Activated naive CD8-positive, alpha-beta T cell treated with anti-CD3 and anti-CD28 coated beads, Interleukin-2, amount 10 ng/mL, durations not matched to agents 7 days and 5 days (primary cell): ENCODE measurements at regions of chr12 and their contacts with region 1.

Region 1: GRCh38 chr12:56178347-56178746 is 10.9 kb downstream of the SMARCC2 start:
- DNase-seq: no peak
- ATAC-seq: no peak
- H3K4me3 Mint-ChIP-seq: no peak overlapping the region
- H3K27ac Mint-ChIP-seq: no peak overlapping the region
- H3K4me1 Mint-ChIP-seq: no peaks in the 10 kb centered on the region
- H3K27me3 Mint-ChIP-seq: no peaks in the 10 kb centered on the region

Region 2: DNA sequence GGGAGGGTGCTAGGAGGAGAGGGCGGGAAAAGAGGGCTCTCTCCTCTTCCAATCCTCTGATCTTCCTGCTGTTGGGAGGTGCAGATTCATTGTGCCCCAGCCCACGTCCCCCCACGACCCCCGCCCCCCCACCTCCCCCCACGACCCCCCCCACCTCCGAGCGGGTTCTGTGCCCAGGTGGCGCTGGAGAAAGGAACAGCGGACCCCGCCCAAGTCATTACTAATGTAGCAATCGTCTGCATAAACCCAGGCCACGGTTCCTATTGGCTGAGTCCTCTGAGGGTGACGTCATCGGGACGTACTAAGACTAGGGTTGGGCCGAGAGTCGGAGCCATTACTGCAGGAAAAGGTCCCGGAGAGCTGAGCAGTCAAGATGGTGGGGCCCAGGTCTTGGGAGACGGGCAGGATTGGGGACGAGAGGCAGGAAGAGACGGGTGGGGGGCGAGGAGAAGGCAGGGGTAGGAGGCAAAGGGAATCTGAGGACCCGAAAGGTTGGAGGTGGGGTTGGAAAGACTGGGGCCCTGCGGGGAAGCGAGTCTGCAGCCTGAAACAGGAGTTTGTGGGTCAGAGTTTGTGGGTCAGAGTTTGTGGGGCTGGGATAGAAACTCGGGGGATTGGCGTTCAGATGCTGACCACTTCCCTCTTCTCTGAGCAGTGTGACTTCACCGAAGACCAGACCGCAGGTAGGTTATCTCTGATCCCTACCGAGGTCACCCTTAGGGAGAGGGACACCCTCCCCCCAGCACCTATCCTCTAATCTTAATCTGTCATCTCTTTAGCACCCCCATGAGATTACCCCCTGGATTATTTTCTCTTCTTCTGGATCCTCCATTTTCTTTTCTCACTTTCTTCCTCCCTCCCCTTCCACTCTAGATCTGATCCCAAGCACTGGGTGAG is 20.1 kb before region 1 on chr12 and contains the start of gene MYL6:
- POLR2A ChIA-PET with region 1: interaction called, 24 read pairs
- DNase-seq: peak; percentile 81
- ATAC-seq: peak; percentile 82
- H3K4me3 Mint-ChIP-seq: peak within 1 kb of the TSS; percentile 96
- H3K27ac Mint-ChIP-seq: peak within 1 kb of the TSS; percentile 97
- H3K4me1 Mint-ChIP-seq: peaks cover 38% of the 10 kb centered on the region
- H3K27me3 Mint-ChIP-seq: no peaks in the 10 kb centered on the region
- total RNA-seq, gene MYL6: 1,083 to 1,169 TPM

Region 3: GRCh38 chr12:56234746-56235436 is 56.5 kb after region 1 on chr12:
- POLR2A ChIA-PET with region 1: no interaction called
- DNase-seq: no peak
- ATAC-seq: no peak
- H3K4me3 Mint-ChIP-seq: no peak overlapping the region
- H3K27ac Mint-ChIP-seq: no peak overlapping the region
- H3K4me1 Mint-ChIP-seq: peaks cover 2% of the 10 kb centered on the region
- H3K27me3 Mint-ChIP-seq: no peaks in the 10 kb centered on the region